ENCODE measurements at regions of chr6 and their contacts with region 1.

Region 1: GRCh38 chr6:159693128-159693893 is at the start of gene SOD2:
- DNase-seq: peak; percentile 49 to 75
- H3K4me3 ChIP-seq: peak within 1 kb of the TSS; percentile 97
- H3K27ac ChIP-seq: peak within 1 kb of the TSS; percentile 58
- H3K4me1 ChIP-seq: peaks cover 23% of the 10 kb centered on the region
- H3K27me3 ChIP-seq: no peaks in the 10 kb centered on the region
- CTCF ChIP-seq: no peak
- total RNA-seq, gene SOD2: 49.6 and 63.3 TPM in 2 replicates

Region 2: DNA sequence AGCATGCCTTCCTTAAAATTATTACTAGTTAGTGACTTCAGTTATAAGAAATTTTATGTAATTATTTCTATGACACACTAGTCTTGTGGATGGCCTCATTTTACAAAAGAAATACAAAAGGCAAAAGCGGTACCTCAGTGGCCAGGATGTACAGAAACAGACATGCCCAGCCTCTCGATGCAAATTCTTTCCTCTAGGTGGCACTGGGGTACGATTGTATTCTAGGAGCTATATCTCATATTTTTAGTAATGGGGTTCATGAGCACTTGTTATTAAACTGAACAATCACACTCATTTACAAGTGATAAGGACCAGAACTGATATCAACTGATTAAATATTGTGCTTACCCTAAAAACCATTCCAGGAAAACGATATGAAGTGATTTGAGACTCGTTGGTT is 60.1 kb before region 1 on chr6:
- CTCF ChIA-PET with region 1: no interaction called
- POLR2A ChIA-PET with region 1: no interaction called
- intact Hi-C with region 1: no loop called
- DNase-seq: peak in 1 of 2 experiments; percentile 4
- H3K4me3 ChIP-seq: no peak overlapping the region
- H3K27ac ChIP-seq: no peak overlapping the region
- H3K4me1 ChIP-seq: no peaks in the 10 kb centered on the region
- H3K27me3 ChIP-seq: peaks cover 34% of the 10 kb centered on the region
- CTCF ChIP-seq: peak; percentile 70

Region 3: GRCh38 chr6:159726918-159727716 is 33.8 kb after region 1 on chr6 and contains the start of gene WTAP:
- CTCF ChIA-PET with region 1: interaction called, 5 read pairs
- POLR2A ChIA-PET with region 1: interaction called, 9 read pairs
- intact Hi-C with region 1: loop called (anchors 2 kb)
- DNase-seq: peak; percentile 87 to 90
- H3K4me3 ChIP-seq: peak within 1 kb of the TSS; percentile 69
- H3K27ac ChIP-seq: peak within 1 kb of the TSS; percentile 91
- H3K4me1 ChIP-seq: peaks cover 17% of the 10 kb centered on the region
- H3K27me3 ChIP-seq: no peaks in the 10 kb centered on the region
- CTCF ChIP-seq: no peak
- total RNA-seq, gene WTAP: 44.7 and 46.5 TPM in 2 replicates

Region 4: GRCh38 chr6:159789377-159790148 is 96.3 kb after region 1 on chr6 and contains the start of gene TCP1:
- CTCF ChIA-PET with region 1: no interaction called
- POLR2A ChIA-PET with region 1: interaction called, 3 read pairs
- intact Hi-C with region 1: loop called (anchors 1 kb)
- DNase-seq: peak; percentile 95 to 97
- H3K4me3 ChIP-seq: peak within 1 kb of the TSS; percentile 86
- H3K27ac ChIP-seq: peak within 1 kb of the TSS; percentile 82
- H3K4me1 ChIP-seq: peaks cover 25% of the 10 kb centered on the region
- H3K27me3 ChIP-seq: no peaks in the 10 kb centered on the region
- CTCF ChIP-seq: no peak
- total RNA-seq, gene TCP1: 159 and 166 TPM in 2 replicates

Region 5: DNA sequence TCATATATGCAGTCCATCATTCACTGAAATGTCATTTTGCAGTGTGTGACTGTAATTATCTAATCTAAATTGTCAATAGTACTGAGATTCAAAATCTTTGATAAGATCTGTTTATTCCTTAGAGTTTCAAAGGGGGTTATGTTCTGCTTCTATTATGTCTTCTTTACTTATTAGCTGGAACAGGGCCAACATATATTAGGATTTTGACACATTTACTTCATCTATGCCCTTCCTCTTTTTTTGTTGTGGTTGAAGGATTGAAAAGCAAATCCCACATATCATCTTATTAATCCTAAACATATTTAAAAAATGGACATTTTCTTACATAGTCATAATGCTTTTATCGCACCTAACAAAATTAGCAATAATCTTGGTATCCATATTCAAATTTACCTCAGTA is 167.2 kb after region 1 on chr6:
- CTCF ChIA-PET with region 1: no interaction called
- POLR2A ChIA-PET with region 1: no interaction called
- intact Hi-C with region 1: no loop called
- DNase-seq: no peak
- H3K4me3 ChIP-seq: no peak overlapping the region
- H3K27ac ChIP-seq: no peak overlapping the region
- H3K4me1 ChIP-seq: no peaks in the 10 kb centered on the region
- H3K27me3 ChIP-seq: 0 out of 2 replicates have a peak, but pooled peaks cover 5% of the 10 kb centered on the region
- CTCF ChIP-seq: no peak

Region 6: DNA sequence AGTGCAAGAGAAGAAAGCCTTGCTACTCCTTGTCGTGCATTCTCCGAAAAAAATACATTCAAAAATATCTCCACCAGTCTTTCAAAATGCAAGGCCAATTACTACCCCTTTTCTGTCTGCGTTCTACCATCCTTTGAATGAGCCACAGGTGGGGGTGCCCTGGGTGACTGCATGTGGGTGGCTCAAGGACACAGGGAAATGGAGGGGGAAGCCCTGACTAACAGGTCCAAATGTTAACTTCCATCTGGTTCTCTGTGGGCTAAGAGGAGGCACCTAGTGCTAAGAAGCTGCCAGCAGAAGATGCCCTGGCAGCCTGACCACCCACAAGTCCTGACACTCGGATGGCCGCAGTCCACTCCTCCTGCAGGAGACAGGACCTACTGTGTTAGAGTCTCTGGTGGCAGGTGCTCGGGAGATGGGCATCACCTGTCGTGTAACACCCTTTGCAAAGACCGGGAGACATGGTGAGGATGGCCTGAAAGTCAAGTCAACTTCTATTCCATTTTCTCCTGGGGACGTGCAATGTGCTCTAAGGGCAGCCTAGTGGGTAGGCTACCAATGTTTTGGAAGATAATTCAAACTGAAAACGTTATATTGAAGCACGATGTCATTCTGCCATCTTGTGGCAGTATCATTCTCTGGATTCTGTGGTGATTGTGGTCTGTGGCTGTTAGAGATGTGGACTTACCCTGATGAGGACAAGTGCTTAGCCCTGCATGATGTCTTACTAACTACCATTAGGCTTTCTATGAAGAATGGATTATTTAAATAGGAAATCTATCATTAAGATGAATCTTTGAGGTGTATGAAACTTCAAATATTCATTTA is 248.2 kb after region 1 on chr6:
- CTCF ChIA-PET with region 1: no interaction called
- POLR2A ChIA-PET with region 1: no interaction called
- intact Hi-C with region 1: loop called (anchors 5 kb)
- DNase-seq: no peak
- H3K4me3 ChIP-seq: no peak overlapping the region
- H3K27ac ChIP-seq: no peak overlapping the region
- H3K4me1 ChIP-seq: no peaks in the 10 kb centered on the region
- H3K27me3 ChIP-seq: peaks cover 35% of the 10 kb centered on the region
- CTCF ChIP-seq: peak; percentile 36

Region 7: DNA sequence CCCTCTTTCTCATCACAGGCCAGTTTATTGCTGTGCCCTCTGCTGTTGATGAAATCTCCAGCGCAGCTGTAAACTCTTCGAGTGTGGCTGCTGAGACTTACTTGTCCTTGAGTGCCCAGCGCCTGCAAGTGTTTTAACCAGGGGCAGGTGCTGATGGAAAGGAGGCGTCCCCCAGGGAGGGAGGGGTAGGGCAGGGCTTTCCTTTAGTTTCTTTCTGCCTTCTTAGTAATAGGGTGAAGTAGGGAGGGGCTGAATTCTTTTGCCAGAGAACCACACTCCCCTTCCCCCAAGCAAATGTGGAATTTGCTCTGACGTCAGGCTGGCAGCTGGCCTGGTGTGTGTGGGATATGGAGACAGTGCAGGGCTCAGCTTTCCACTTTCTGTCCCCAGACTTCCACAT is 336.8 kb after region 1 on chr6:
- CTCF ChIA-PET with region 1: no interaction called
- POLR2A ChIA-PET with region 1: no interaction called
- intact Hi-C with region 1: no loop called
- DNase-seq: peak in 1 of 2 experiments; percentile 1
- H3K4me3 ChIP-seq: no peak overlapping the region
- H3K27ac ChIP-seq: no peak overlapping the region
- H3K4me1 ChIP-seq: no peaks in the 10 kb centered on the region
- H3K27me3 ChIP-seq: no peaks in the 10 kb centered on the region
- CTCF ChIP-seq: no peak

Region 8: GRCh38 chr6:160455541-160456213 is 762.4 kb after region 1 on chr6:
- CTCF ChIA-PET with region 1: no interaction called
- POLR2A ChIA-PET with region 1: no interaction called
- intact Hi-C with region 1: loop called (anchors 10 kb)
- DNase-seq: peak in 1 of 2 experiments; percentile 31
- H3K4me3 ChIP-seq: no peak overlapping the region
- H3K27ac ChIP-seq: no peak overlapping the region
- H3K4me1 ChIP-seq: peaks cover 6% of the 10 kb centered on the region; the same call in 1 of the 2 replicates
- H3K27me3 ChIP-seq: no peaks in the 10 kb centered on the region
- CTCF ChIP-seq: peak; percentile 99

Measured in PC-9 (cell line).